CD4-positive, alpha-beta T cell (primary cell): ENCODE measurements at regions of chr17 and their contacts with region 1.

Region 1: DNA sequence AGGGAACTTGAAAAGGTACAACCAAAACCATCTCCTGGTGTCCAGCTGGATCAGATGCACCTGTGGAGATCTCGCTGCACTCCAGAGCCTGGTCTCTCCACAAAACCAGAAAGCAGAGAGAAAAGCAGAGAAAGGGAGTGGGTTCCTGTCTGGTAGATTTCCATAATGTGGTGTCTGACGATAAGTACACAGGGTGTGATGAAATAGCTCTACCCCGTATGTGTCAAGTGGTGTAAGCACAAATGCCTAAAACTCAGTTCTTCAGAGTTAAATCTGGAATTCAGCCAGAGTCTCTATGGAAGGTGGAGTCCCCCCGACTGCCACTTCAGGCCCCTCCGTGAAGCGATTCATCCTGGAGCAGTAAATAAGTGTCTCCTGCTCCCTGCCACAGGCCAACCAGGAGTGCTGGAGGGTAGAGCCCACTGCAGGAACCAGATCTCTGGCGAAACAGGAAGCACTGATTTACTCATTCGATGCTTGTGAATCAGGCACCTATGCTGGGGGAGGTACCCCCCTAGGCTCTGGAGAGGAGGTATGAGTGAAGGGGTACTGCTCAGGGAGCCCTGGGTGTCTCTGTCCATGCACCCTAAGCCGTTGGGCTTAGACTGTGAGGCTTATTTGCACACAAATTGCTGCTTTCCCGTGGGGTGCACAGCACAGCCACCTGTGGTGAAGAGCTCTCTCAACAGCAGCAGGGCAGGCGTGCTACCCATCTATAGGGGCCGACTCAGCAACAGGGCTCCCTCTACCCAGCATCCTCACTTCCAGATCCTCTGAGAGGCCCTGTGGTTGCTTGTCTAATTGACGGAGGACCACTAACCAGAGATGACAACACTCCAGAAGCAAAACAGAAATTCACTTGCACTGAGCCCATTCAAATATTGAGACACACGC is 97.1 kb upstream of the MYOCD start:
- DNase-seq: no peak
- ATAC-seq: no peak
- H3K4me3 ChIP-seq: no peak overlapping the region
- H3K4me3 Mint-ChIP-seq: no peak overlapping the region
- H3K27ac ChIP-seq: no peak overlapping the region
- H3K27ac Mint-ChIP-seq: no peak overlapping the region
- H3K4me1 ChIP-seq: no peaks in the 10 kb centered on the region
- H3K4me1 Mint-ChIP-seq: no peaks in the 10 kb centered on the region
- H3K27me3 ChIP-seq: no peaks in the 10 kb centered on the region
- H3K27me3 Mint-ChIP-seq: no peaks in the 10 kb centered on the region
- CTCF ChIP-seq: no peak

Region 2: DNA sequence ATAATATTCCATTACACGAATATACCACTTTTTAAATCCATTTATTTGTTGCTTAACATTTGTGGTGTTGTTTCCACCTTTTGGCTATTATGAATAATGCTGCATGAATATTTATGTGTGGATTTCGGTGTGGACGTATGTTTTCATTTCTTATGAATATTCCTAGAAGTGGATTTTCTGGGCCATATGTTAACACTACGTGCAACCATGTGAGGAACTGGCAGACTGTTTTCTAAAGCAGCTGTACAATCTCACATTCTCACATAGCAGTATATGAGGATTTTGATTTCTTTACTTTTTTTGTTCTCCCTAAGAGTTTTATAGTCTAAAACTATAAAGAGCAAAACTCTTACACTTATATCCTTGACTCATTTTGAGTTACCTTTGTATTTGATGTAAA is 404.5 kb before region 1 on chr17:
- CTCF ChIA-PET with region 1: no interaction called
- POLR2A ChIA-PET with region 1: no interaction called
- intact Hi-C with region 1: no loop called
- DNase-seq: no peak
- ATAC-seq: no peak
- H3K4me3 ChIP-seq: no peak overlapping the region
- H3K4me3 Mint-ChIP-seq: no peak overlapping the region
- H3K27ac ChIP-seq: no peak overlapping the region
- H3K27ac Mint-ChIP-seq: no peak overlapping the region
- H3K4me1 ChIP-seq: no peaks in the 10 kb centered on the region
- H3K4me1 Mint-ChIP-seq: no peaks in the 10 kb centered on the region
- H3K27me3 ChIP-seq: no peaks in the 10 kb centered on the region
- H3K27me3 Mint-ChIP-seq: peaks cover 3% of the 10 kb centered on the region
- CTCF ChIP-seq: no peak

Region 3: GRCh38 chr17:12509801-12510200 is 58.8 kb before region 1 on chr17:
- CTCF ChIA-PET with region 1: no interaction called
- POLR2A ChIA-PET with region 1: no interaction called
- intact Hi-C with region 1: loop called in 1 of 2 experiments (anchors 10 kb)
- DNase-seq: no peak
- ATAC-seq: no peak
- H3K4me3 ChIP-seq: no peak overlapping the region
- H3K4me3 Mint-ChIP-seq: no peak overlapping the region
- H3K27ac ChIP-seq: no peak overlapping the region
- H3K27ac Mint-ChIP-seq: no peak overlapping the region
- H3K4me1 ChIP-seq: no peaks in the 10 kb centered on the region
- H3K4me1 Mint-ChIP-seq: no peaks in the 10 kb centered on the region
- H3K27me3 ChIP-seq: no peaks in the 10 kb centered on the region
- H3K27me3 Mint-ChIP-seq: no peaks in the 10 kb centered on the region
- CTCF ChIP-seq: no peak